Endothelial cell of umbilical vein (primary cell): ENCODE measurements at regions of chr2 and their contacts with region 1.

Region 1: DNA sequence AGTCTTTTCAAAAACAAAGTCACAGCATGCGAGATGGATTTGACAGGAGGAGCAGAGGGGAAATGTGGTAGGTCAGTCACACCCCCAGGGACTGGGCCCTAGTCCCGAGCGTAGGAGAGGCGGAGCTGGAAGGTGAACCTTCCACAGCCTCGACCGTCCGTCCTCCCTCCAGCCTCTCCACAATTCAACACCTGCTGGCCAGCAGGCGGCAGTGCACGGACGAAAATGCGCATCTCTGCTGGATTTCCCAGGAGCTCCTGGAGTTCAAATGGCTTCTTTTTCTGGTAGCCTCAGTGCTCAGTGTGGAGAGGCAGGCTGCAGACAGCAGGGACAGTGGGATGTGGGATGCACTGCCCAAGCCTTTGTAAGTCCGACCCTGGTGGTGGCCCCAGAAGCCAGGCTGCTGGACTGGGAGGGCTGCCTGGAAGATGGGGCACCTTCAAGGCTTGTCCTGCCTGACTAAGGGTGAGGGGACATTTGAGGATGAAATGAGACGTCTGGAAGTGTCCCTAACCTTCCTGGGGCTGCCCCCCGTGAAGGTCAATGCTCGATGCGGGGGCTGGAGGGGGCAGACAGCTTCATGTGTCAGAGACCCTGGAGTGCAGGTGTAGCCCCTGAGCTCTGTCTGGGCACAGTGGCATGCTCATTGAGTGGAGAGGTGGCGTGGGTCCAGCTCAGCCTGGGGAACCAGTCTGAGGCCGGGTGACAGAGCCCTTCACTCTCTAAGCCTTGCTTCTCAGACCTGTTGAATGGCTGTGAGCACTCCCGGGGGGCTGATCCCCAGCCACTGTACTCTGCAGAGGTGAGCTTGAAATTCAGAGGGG is 189.5 kb downstream of the TFCP2L1 start:
- DNase-seq: peak; percentile 45
- H3K4me3 ChIP-seq: no peak overlapping the region
- H3K27ac ChIP-seq: no peak overlapping the region
- H3K4me1 ChIP-seq: no peaks in the 10 kb centered on the region
- H3K27me3 ChIP-seq: no peaks in the 10 kb centered on the region
- CTCF ChIP-seq: peak; percentile 67 to 79
- POLR2A ChIP-seq: no peak

Region 2: GRCh38 chr2:121076885-121077549 is 18.5 kb before region 1 on chr2:
- CTCF ChIA-PET with region 1: interaction called, 39 read pairs
- POLR2A ChIA-PET with region 1: no interaction called
- dilution Hi-C with region 1: no loop called
- intact Hi-C with region 1: no loop called
- DNase-seq: peak; percentile 33
- H3K4me3 ChIP-seq: no peak overlapping the region
- H3K27ac ChIP-seq: no peak overlapping the region
- H3K4me1 ChIP-seq: peaks cover 4% of the 10 kb centered on the region
- H3K27me3 ChIP-seq: peaks cover 9 to 10% of the 10 kb centered on the region in 2 experiments
- CTCF ChIP-seq: peak; percentile 97
- POLR2A ChIP-seq: no peak

Region 3: DNA sequence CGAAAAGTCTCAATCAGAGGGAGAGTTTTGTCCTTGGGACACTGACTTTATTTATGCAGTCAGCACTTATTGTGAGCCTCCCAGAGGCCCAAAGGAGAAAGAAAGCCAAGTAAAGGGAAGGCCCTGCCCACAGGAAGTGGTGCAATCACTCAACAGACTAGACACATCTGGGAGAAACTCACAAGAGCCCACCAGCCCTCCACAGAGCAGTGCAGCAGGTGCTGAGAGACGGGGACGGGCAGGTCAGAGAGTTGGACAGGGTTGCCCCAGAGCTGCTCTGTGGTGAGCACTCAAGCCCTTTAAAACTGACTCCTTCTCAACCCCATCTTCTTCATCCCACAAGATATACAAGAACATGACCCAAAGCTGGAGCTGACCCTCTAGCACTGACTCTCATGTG is 93.5 kb after region 1 on chr2:
- CTCF ChIA-PET with region 1: no interaction called
- POLR2A ChIA-PET with region 1: no interaction called
- dilution Hi-C with region 1: no loop called
- intact Hi-C with region 1: no loop called
- DNase-seq: no peak
- H3K4me3 ChIP-seq: no peak overlapping the region
- H3K27ac ChIP-seq: no peak overlapping the region
- H3K4me1 ChIP-seq: no peaks in the 10 kb centered on the region
- H3K27me3 ChIP-seq: no peaks in the 10 kb centered on the region
- CTCF ChIP-seq: no peak
- POLR2A ChIP-seq: no peak

Region 4: DNA sequence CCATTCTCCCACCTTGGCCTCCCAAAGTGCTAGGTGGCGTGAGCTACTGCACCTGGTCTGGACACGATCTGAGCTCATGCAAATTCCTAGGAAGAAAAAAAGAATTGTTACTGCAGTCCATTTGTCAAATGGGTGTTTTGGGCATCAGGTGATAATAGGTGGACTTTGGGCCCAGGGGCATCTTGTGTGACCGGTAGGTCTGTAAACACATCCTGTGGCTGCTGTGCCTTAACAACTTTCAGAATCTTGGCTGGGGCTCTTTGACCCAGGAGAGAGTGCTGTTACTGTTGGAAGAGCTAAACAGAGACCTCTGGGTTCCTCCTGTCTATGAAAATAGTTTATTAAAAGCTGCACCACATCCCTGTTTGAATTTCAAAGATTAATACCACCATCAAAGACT is 224.5 kb after region 1 on chr2:
- CTCF ChIA-PET with region 1: interaction called, 7 read pairs
- POLR2A ChIA-PET with region 1: no interaction called
- dilution Hi-C with region 1: no loop called
- intact Hi-C with region 1: loop called (anchors 1 kb)
- DNase-seq: no peak
- H3K4me3 ChIP-seq: no peak overlapping the region
- H3K27ac ChIP-seq: no peak overlapping the region
- H3K4me1 ChIP-seq: no peaks in the 10 kb centered on the region
- H3K27me3 ChIP-seq: peaks cover 0 to under 1% of the 10 kb centered on the region in 2 experiments
- CTCF ChIP-seq: no peak
- POLR2A ChIP-seq: no peak

Region 5: DNA sequence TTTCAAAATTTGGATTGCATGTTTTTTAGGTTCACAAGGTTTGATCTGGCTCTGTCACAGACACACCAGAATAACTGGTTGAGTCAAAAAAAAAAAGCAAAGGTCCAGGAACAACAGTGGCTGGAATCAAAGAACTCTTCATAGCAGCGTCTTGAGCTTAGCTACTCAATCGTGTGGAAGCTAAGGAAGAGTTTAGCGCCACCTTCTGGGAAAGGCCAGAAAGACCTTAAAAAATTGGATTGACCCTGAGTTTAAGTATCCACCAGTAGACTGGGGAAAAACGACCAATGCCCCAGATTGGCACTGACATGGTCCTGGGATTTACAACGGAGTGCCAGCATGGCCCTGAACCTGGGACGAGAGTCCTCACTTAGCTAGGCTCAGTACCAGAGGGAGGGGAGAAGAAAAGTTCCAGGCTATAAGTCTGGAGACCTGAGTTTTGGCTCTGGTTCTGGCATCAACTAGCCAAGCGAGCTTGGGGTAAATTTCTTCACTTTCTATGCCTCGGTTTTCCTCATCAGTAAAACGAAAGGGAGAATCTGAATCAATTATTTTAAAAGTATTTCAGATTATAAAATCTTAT is 260.7 kb after region 1 on chr2:
- CTCF ChIA-PET with region 1: interaction called, 133 read pairs
- POLR2A ChIA-PET with region 1: no interaction called
- dilution Hi-C with region 1: no loop called
- intact Hi-C with region 1: loop called (anchors 1 kb)
- DNase-seq: peak; percentile 74
- H3K4me3 ChIP-seq: no peak overlapping the region
- H3K27ac ChIP-seq: no peak overlapping the region
- H3K4me1 ChIP-seq: peaks cover 16% of the 10 kb centered on the region
- H3K27me3 ChIP-seq: no peaks in the 10 kb centered on the region
- CTCF ChIP-seq: peak; percentile 73 to 76
- POLR2A ChIP-seq: no peak

Region 6: DNA sequence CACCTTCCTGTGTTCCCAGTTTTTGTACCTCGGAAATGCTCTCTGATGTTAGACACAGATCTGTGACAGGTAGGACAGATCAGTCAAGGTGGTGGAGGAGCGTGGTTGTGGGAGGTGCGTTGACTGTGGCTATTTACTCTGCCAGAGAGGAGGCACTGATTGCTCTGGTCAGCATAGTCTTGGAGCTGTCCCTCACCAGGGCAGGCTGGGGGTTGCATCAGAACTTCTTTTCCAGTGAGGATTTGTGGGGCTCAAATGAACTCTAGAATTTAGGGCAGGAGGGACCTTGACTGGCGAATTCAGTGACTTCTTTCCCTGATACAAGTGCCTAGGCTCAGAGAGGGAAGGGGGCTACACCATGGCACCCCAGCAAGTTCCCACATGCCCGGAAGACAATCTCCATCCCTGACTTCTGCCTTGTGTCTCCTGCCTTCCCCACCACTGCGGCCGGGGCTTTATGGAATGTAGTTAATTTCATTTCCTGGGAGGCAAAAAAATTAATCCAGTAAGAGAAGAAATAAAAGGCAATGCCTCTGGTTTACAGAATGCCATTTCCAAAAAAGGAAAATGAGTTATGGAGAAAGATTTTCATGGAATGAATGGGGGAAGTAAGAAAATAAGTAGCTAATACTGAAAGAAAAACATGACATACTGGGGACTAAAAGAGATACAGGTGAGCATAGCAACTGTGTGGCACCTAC is 615.2 kb after region 1 on chr2:
- CTCF ChIA-PET with region 1: interaction called, 3 read pairs
- POLR2A ChIA-PET with region 1: no interaction called
- dilution Hi-C with region 1: no loop called
- intact Hi-C with region 1: loop called (anchors 10 kb)
- DNase-seq: no peak
- H3K4me3 ChIP-seq: no peak overlapping the region
- H3K27ac ChIP-seq: no peak overlapping the region
- H3K4me1 ChIP-seq: no peaks in the 10 kb centered on the region
- H3K27me3 ChIP-seq: peaks cover 3 to 10% of the 10 kb centered on the region in 2 experiments
- CTCF ChIP-seq: no peak
- POLR2A ChIP-seq: no peak

Region 7: DNA sequence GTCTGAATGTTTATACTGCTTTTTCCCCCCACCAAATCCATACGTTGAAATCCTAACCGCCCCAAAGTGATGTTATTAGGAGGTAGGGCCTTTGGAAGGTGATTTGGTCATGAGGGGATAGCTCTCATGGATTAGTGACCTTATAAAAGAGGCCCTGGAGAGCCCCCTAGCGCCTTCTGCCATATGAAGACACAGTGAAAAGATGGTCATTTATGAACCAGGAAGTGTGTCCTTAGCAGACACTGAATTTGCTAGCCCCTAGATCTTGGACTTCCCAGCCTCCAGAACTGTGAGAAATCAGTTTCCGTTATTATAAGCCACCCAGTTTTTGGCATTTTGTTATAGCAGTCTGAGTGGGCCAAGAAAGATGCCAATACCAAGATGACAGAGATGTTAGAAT is 652.7 kb after region 1 on chr2:
- CTCF ChIA-PET with region 1: interaction called, 9 read pairs
- POLR2A ChIA-PET with region 1: no interaction called
- dilution Hi-C with region 1: no loop called
- intact Hi-C with region 1: loop called (anchors 10 kb)
- DNase-seq: peak; percentile 28
- H3K4me3 ChIP-seq: no peak overlapping the region
- H3K27ac ChIP-seq: no peak overlapping the region
- H3K4me1 ChIP-seq: no peaks in the 10 kb centered on the region
- H3K27me3 ChIP-seq: peaks cover 0 to 3% of the 10 kb centered on the region in 2 experiments
- CTCF ChIP-seq: peak; percentile 27 to 35
- POLR2A ChIP-seq: no peak